Activated T-helper 1 cell treated with anti-CD3 and anti-CD28 coated beads, Interleukin-12 subunit alpha, Interleukin-12 subunit beta, Interleukin-2, Interleukin-4 antibody, amounts not matched to agents 30 ng/mL and 10 ng/mL and 1 ng/mL, durations not matched to agents 14 hours and 24 hours and 36 hours (primary cell): ENCODE measurements at regions of chr11 and their contacts with region 1.

Region 1: GRCh38 chr11:78290293-78291176 is 101.8 kb downstream of the USP35 start:
- DNase-seq: peak; percentile 54
- H3K4me3 Mint-ChIP-seq: peak overlapping the region; percentile 73
- H3K27ac Mint-ChIP-seq: peak overlapping the region; percentile 92
- H3K4me1 Mint-ChIP-seq: peaks cover 68% of the 10 kb centered on the region
- H3K27me3 Mint-ChIP-seq: no peaks in the 10 kb centered on the region

Region 2: DNA sequence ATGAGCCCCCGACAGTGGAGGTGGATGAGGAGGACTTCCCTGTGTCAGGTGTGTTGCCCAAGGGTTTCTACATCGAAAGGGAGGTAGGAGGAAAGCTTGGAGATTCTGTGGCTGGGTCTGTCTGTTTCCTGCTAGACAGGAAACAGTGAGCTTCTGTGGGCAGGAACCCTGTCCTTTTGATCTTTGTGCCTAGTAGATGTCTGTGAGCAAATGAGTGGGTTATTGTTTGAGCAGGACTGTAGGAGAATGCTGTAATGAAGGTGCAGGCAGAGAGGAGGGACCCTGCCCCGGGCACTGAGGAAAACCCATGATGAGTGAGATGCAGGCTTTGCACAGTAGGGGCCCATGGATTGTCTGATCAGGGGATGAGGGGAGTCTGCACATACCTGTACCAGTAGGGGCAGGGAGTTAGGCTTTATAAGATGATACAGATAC is 87.8 kb before region 1 on chr11:
- intact Hi-C with region 1: loop called (anchors 1 kb)
- DNase-seq: peak; percentile 59
- H3K4me3 Mint-ChIP-seq: peak overlapping the region; percentile 80
- H3K27ac Mint-ChIP-seq: peak overlapping the region; percentile 96
- H3K4me1 Mint-ChIP-seq: peaks cover 39% of the 10 kb centered on the region
- H3K27me3 Mint-ChIP-seq: no peaks in the 10 kb centered on the region

Region 3: DNA sequence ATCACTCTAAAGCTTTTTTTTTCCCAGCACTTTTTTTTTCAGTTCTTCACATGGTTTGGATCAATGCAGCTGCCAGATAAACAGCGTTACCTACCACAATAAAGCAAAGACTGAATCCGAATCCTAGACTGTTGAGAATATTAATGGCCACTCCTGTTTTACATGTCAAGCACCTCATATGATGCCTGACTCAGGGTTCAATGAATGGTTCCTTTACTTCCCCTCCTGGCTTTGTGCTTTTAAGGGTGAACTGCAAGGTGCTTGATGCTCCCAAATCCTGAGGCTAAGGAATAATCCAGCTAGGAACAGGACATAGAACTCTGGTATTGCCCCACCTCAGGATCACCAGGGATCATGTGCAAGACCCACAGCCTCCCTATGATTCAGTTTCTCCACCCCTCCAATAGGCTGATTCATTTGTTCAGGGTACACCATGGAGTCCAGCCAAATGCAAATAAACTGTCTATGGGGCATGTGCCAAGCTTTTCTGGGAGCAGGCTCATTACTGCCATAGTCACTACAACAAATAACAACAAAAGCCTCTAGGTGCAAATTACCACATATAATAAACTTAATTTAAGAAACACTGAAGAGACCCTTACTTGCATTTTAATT is 22.8 kb after region 1 on chr11:
- intact Hi-C with region 1: loop called (anchors 2 kb)
- DNase-seq: no peak
- H3K4me3 Mint-ChIP-seq: no peak overlapping the region
- H3K27ac Mint-ChIP-seq: no peak overlapping the region
- H3K4me1 Mint-ChIP-seq: peaks cover 81% of the 10 kb centered on the region
- H3K27me3 Mint-ChIP-seq: peaks cover 2% of the 10 kb centered on the region

Region 4: GRCh38 chr11:78339483-78339882 is 48.9 kb after region 1 on chr11:
- intact Hi-C with region 1: loop called (anchors 1 kb)
- DNase-seq: no peak
- H3K4me3 Mint-ChIP-seq: peak overlapping the region; percentile 31
- H3K27ac Mint-ChIP-seq: peak overlapping the region; percentile 94
- H3K4me1 Mint-ChIP-seq: peaks cover 86% of the 10 kb centered on the region
- H3K27me3 Mint-ChIP-seq: no peaks in the 10 kb centered on the region

Region 5: DNA sequence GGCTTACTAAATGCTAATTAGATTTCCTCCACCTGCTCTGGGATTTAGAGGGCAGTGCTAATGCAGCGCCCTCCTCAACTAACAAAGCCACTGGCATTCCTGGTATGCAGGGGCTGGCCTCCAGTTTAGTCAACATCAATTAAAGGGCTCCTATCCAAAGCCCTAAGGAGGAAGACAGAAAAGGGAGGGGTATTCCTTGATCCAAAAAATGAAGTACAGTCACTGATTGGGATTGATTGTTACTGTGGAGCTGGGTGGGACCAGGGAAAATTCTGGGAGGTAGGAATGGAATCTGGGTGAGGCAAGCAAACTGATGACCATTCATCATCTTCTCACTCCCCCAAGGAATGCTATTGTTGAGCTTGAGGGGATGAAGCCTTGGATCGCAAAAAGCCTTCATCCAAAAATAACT is 74.9 kb after region 1 on chr11:
- intact Hi-C with region 1: no loop called
- DNase-seq: no peak
- H3K4me3 Mint-ChIP-seq: no peak overlapping the region
- H3K27ac Mint-ChIP-seq: no peak overlapping the region
- H3K4me1 Mint-ChIP-seq: peaks cover 18% of the 10 kb centered on the region
- H3K27me3 Mint-ChIP-seq: peaks cover 3% of the 10 kb centered on the region

Region 6: DNA sequence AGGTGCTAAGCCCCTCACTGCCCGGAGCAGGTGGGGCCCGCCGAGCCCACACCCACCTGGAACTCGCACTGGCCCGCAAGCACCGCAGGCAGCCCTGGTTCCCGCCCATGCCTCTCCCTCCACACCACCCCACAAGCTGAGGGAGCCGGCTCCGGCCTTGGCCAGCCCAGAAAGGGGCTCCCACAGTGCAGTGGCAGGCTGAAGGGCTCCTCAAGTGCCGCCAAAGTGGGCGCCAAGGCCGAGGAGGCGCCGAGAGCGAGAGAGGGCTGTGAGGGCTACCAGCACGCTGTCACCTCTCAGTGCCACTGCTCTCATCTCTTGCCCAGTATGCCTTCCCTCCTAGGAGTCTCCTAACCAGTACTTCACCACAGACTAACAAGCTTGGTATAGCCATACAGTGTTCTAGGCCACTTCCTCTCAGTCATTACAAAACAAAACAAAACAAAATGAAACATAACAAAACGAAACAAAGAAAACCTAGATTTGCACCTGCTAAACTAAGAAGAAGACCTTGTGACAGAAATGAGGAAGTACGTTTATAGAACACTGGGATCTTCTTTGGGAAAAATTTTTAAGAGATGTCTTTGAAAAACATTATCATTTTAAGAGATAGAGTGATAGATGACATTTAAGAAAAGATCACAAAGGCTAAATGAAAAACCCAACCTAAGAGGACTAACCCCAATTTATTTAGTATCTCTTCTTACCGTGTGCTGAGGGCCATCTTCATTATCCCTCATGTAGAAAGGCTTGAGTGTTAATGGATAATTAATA is 174.8 kb after region 1 on chr11:
- intact Hi-C with region 1: loop called (anchors 2 kb)
- DNase-seq: peak; percentile 59
- H3K4me3 Mint-ChIP-seq: peak overlapping the region; percentile 73
- H3K27ac Mint-ChIP-seq: peak overlapping the region; percentile 92
- H3K4me1 Mint-ChIP-seq: peaks cover 45% of the 10 kb centered on the region
- H3K27me3 Mint-ChIP-seq: no peaks in the 10 kb centered on the region

Region 7: GRCh38 chr11:78595436-78596130 is 305.0 kb after region 1 on chr11:
- intact Hi-C with region 1: no loop called
- DNase-seq: no peak
- H3K4me3 Mint-ChIP-seq: no peak overlapping the region
- H3K27ac Mint-ChIP-seq: no peak overlapping the region
- H3K4me1 Mint-ChIP-seq: no peaks in the 10 kb centered on the region
- H3K27me3 Mint-ChIP-seq: peaks cover 26% of the 10 kb centered on the region